Thyroid gland (tissue), 4 donors: ENCODE measurements at regions of chr10 and their contacts with region 1.

Region 1: GRCh38 chr10:100993986-100994708 is 5.5 kb upstream of the LZTS2 start:
- DNase-seq: peak in 1 of 2 donors; percentile 33
- H3K4me3 ChIP-seq: no peak overlapping the region
- H3K27ac ChIP-seq: no peak overlapping the region
- H3K4me1 ChIP-seq: peaks cover 12 to 15% of the 10 kb centered on the region in 2 donors
- H3K27me3 ChIP-seq: no peaks in the 10 kb centered on the region
- CTCF ChIP-seq: peak; percentile 22 to 86 (median 60)
- POLR2A ChIP-seq: no peak

Region 2: GRCh38 chr10:100878291-100878910 is 115.7 kb before region 1 on chr10:
- intact Hi-C with region 1: no loop called
- DNase-seq: peak; percentile 41 to 48
- H3K4me3 ChIP-seq: no peak overlapping the region
- H3K27ac ChIP-seq: no peak overlapping the region
- H3K4me1 ChIP-seq: peaks cover 0 to 5% of the 10 kb centered on the region in 2 donors
- H3K27me3 ChIP-seq: peaks cover 8% of the 10 kb centered on the region
- CTCF ChIP-seq: peak in 4 of 6 experiments; percentile 35 to 56 (median 49)
- POLR2A ChIP-seq: no peak

Region 3: DNA sequence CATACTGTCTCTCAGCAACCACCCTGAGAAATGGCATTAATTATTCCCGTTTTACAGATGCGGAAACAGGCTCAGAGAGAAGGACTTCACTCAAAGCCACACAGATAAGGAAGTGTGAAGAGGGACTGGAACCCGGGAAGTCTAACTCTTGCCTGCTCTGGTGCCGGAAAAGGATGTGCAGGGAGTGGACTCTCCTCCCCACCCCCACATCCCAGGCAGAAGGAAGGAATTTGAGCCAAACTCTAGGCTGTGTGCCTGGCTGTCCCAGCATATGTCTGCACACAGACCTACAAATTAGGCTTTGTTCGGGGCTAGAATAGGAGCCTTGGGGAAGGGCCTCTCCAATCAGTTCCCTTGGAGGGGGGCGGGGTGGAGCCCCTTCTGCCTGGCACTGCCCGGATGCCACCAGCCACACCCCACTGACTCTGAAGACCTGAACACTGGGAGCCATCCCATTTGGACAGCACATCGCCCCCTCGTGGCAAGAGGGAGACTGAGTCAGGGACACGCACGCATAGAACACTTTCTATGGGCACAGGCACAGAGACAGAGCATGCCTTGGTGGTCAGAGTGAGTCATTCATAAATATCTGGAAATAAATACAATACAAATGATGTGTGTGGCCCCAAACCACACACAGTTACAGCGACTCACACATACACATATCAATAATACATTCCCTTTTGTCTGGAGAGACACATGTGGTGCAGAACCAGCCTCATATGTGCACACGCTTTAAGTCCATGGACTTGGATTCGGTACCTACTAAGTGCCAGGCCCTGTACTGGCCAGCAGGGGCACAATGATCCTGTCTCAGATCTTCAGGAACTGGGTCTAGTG is 18.6 kb after region 1 on chr10:
- intact Hi-C with region 1: loop called (anchors 2 kb)
- DNase-seq: peak; percentile 89 to 90
- H3K4me3 ChIP-seq: no peak overlapping the region
- H3K27ac ChIP-seq: peak overlapping the region in 1 of 3 donors; percentile 21
- H3K4me1 ChIP-seq: peaks cover 7 to 10% of the 10 kb centered on the region in 2 donors
- H3K27me3 ChIP-seq: peaks cover 7% of the 10 kb centered on the region
- CTCF ChIP-seq: peak; percentile 73 to 98 (median 84)
- POLR2A ChIP-seq: no peak